Aorta (tissue), 5 donors: ENCODE measurements at regions of chr6 and their contacts with region 1.

Region 1: DNA sequence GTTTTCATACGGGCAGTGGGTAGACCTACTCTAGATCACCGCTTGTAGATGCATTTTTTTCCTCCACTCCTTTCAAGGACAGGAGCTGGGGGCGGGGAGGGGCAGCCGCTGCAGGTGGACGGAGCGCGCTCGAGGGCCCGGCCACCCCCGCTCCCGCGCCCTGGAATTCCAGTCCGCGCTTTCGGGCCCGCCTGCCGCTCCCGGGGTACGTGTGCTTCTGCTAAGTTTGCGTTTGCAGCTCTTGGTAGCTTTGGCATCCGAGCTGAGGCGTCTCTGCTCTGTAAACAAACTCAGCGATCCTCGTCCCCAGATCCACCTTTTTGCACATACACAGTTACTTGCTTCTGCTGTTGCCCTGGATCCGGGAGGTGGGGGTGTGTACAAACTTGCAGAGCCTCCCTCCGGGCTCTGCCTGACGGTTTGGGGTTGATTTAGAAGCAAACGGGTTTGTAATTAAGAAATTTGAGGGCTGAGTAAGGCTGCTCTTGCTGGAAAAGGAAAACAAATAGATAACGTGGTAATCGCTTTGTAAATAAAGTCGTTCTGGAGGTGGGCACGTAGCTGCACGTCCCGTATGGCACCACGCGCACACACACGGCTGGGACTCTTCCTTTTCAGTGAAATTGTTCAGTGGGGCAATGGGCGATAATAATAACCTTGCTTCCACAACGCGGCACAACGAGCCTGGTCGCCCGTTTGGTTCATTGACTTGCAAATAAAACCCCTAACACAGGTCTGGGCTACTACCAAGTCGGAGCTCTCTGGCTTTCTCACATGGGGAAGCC is 976 bp upstream of the CITED2 start:
- DNase-seq: peak; percentile 93 to 94
- ATAC-seq: peak; percentile 90
- H3K4me3 ChIP-seq: peak overlapping the region; percentile 59 to 66
- H3K27ac ChIP-seq: peak overlapping the region; percentile 12 to 78
- H3K4me1 ChIP-seq: no peaks in the 10 kb centered on the region
- H3K27me3 ChIP-seq: no peaks in the 10 kb centered on the region

Region 2: DNA sequence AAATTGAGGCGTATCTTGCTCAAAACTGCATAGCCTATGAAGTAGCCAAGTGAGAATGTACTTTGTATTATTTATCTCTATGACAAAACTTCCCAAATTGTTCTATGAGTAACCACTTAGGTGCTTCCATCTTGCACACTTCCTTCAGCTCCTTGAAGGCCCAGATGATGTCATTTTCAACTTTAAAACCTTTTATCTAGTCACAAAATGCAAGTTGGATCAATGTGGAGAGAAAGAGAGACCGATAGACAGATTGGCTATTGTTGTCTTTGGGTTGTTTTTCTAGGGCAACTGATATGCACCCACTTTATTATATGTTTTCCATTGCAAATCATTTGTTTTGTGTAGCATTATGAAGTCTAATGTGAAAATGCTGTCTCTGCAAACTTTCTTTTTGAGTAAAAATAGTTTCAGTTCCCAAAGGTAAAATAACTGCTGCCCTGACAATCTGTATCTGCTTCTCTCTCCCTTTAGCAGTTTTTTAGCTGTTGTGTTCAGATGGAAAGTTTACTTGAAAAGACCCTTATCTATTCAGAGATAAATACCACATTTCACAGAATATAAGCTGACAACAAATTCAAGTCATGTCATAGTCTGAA is 72.7 kb after region 1 on chr6:
- intact Hi-C with region 1: no loop called
- DNase-seq: no peak
- ATAC-seq: no peak
- H3K4me3 ChIP-seq: no peak overlapping the region
- H3K27ac ChIP-seq: no peak overlapping the region
- H3K4me1 ChIP-seq: no peaks in the 10 kb centered on the region
- H3K27me3 ChIP-seq: no peaks in the 10 kb centered on the region

Region 3: DNA sequence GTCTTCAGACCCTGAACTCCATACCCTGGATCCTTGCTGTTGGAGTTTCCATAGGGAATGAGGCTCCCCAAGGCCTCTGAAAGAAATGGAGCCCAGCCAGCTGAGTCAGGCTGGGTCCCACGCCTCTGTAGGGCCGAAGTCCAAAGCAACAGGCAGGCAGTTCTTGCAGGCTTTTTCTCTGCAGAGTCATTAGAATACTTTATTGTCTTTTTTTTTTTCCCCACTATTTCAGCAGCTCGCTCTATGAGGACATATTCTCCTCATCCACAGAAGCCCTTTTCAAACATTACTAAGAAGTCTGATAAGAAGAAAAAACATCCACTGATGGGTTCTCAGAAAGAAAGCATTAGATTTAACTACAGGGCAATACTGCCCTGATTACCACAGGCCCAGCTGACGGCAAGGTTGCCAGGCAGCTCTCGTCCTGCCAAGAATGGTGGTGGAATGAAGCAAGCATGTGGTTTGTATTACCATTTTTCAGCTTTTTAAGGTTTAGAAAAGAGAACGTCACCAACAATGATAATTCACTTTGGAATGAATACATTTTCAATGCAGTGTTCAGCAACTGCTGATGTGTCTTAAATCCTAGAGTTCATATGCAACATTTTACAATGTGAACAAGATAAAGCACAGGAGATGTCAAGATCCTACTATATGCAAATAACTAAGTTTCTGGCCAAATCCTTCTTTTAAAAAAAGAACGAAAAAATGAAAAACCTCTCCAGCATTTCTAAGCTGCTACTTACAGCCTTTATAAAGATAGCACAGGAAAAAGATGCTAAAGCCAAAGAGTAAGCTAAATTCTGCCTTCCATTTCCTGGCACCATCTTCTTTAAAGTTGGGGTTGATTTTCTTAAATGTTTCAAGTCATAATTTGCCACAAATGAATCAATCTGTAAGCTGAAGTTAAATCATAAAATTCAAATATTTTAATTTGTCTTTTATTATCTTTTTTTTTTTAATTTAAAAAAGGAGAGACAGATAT is 222.6 kb after region 1 on chr6:
- intact Hi-C with region 1: loop called (anchors 5 kb)
- DNase-seq: peak; percentile 88 to 94
- ATAC-seq: peak; percentile 89
- H3K4me3 ChIP-seq: no peak overlapping the region
- H3K27ac ChIP-seq: peak overlapping the region; percentile 61 to 96
- H3K4me1 ChIP-seq: peaks cover 0 to 8% of the 10 kb centered on the region in 2 donors
- H3K27me3 ChIP-seq: no peaks in the 10 kb centered on the region

Region 4: GRCh38 chr6:139819776-139820175 is 444.4 kb after region 1 on chr6:
- intact Hi-C with region 1: loop called in 1 of 2 experiments (anchors 5 kb)
- DNase-seq: no peak
- ATAC-seq: no peak
- H3K4me3 ChIP-seq: no peak overlapping the region
- H3K27ac ChIP-seq: no peak overlapping the region
- H3K4me1 ChIP-seq: peaks cover 0 to 2% of the 10 kb centered on the region in 2 donors
- H3K27me3 ChIP-seq: no peaks in the 10 kb centered on the region

Region 5: DNA sequence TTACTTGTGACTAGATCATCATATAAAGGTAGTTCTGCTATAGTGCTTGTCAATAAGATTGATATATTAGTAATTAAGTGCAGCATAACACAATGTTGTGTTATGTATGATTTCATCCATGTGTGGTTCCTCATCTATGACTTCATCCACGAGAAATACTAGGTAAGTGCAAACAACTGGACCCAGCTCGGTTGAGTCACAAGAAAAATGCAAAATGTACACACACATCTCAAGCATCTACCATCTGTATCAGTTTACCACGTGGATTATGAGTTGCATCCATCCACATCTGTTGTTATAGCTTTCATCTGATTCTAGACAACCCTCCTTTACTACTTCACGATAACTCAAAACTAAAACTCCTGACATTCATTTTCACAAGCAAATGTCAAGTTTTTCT is 516.0 kb after region 1 on chr6:
- intact Hi-C with region 1: loop called (anchors 5 to 10 kb)
- DNase-seq: no peak
- ATAC-seq: no peak
- H3K4me3 ChIP-seq: no peak overlapping the region
- H3K27ac ChIP-seq: no peak overlapping the region
- H3K4me1 ChIP-seq: no peaks in the 10 kb centered on the region
- H3K27me3 ChIP-seq: no peaks in the 10 kb centered on the region

Region 6: GRCh38 chr6:139973669-139974344 is 598.4 kb after region 1 on chr6:
- intact Hi-C with region 1: loop called in 1 of 2 experiments (anchors 10 kb)
- DNase-seq: no peak
- ATAC-seq: no peak
- H3K4me3 ChIP-seq: no peak overlapping the region
- H3K27ac ChIP-seq: no peak overlapping the region
- H3K4me1 ChIP-seq: peaks cover 2% of the 10 kb centered on the region in 2 donors
- H3K27me3 ChIP-seq: no peaks in the 10 kb centered on the region

Region 7: DNA sequence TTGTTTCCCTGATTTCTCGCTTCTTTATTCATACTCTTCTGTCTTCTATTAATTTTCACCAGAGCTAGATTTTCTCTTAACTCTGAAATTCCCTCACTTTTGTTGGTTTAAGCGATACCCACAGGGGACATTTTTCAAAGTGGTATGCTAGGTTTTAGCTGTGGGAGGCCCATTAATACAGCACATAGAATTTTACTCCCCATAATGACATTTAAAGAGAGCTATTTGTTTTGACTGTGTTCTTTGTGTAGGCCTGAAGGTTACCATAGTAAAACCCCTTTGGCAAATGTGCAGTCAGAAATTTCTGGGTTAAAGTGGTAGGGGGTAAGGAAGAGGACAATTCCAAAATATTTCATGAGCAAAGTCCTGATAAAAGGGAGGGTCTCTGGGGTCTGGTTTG is 720.1 kb after region 1 on chr6:
- intact Hi-C with region 1: loop called in 1 of 2 experiments (anchors 10 kb)
- DNase-seq: no peak
- ATAC-seq: no peak
- H3K4me3 ChIP-seq: no peak overlapping the region
- H3K27ac ChIP-seq: no peak overlapping the region
- H3K4me1 ChIP-seq: peaks cover 0 to 3% of the 10 kb centered on the region in 2 donors
- H3K27me3 ChIP-seq: no peaks in the 10 kb centered on the region

Region 8: DNA sequence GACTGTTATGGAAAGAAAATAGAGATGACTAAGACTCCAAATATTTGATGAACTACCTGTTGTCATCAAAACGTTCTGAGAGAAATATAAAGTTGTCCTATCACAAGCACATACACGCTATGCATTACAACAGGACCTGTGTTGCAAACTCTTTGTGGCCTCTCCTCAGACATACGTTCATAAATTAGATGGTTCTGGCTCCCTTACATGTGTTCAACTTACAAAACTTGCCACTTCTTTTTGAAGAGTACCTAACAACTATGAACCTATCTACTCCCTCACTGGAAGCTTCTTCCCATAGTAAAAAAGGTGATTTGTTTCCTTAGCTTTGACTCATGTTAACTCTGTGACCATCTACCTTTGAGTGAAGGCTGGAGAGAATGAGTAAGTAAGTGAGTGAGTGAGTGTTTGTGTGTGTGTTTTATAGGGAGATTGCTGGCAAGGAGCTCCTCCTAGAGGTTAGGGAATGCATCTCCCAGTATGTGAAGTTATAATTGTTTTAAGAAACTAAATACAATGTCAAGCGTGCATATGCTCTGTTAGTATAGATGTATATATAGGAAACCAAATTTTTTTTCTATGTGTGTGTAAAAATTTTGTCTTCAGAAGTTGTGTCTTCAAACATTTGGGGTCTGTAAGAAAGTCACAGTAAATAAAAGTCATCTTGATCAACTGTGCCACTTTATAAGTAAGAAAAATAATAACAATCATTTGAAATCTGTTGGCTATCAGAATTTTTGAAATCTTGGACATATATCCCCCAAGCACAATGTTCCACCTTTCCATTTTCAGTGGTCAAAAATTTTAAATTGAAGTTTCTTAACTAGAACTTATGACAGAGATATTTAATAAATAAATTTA is 1546.2 kb after region 1 on chr6:
- intact Hi-C with region 1: loop called (anchors 5 kb)
- DNase-seq: no peak
- ATAC-seq: peak; percentile 81
- H3K4me3 ChIP-seq: no peak overlapping the region
- H3K27ac ChIP-seq: no peak overlapping the region
- H3K4me1 ChIP-seq: no peaks in the 10 kb centered on the region
- H3K27me3 ChIP-seq: no peaks in the 10 kb centered on the region